ENCODE measurements at regions of chr6 and their contacts with region 1.

Region 1: DNA sequence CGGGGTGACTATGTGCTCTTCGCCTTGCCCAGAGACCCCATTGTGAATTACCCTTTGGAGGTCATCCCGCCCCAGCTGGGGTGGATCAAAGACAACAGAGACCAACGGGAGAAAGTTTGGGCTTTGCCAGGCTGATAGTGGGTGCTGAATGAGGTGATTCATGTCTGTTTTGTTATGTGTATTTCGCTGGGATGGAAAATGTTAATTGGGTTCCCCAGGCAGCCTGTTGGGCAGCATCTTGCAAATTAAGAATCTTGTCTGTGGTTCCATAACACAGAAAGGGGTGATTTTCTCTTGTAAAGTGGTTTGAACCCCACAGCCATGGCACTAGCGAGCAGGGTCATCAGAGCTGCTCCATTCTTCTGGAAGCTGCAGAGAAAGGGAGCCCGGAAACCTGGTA is 63.1 kb upstream of the UNC93A start:
- DNase-seq: no peak
- ATAC-seq: no peak
- H3K4me3 ChIP-seq: no peak overlapping the region
- H3K27ac ChIP-seq: no peak overlapping the region
- H3K4me1 ChIP-seq: no peaks in the 10 kb centered on the region
- H3K27me3 ChIP-seq: peaks cover 5 to 8% of the 10 kb centered on the region in 2 experiments
- CTCF ChIP-seq: no peak
- EP300 ChIP-seq: no peak
- POLR2A ChIP-seq: no peak
- RAD21 ChIP-seq: no peak

Region 2: DNA sequence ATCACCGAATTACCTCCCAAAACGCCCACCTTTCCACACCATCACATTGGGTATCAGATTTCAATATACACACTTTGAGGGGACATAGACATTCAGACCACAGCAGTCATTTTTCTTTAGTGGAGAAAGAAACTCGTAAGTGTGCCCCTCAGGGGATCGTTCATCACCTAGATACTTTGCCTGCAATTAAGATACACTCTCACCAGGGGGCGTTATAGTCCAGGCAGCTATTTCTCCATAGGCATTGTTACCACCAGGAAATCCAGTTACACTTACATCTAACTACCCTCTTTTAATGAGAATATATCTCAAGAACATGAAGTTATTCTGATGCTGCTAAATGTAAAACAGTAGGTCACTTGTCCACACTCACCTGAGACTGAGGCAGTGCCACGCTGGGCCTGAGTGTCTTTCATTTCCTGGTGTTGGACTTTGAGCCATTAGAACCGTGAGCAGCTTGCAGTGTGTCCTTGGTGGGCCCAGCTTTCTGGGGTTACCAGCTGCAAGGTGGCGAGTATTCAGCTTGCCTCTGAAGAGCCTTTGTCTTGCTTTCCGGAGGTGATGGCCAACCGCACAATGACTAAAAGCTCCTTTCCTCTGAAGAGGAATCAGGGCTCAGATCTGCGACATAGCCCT is 28.1 kb after region 1 on chr6:
- CTCF ChIA-PET with region 1: no interaction called
- POLR2A ChIA-PET with region 1: no interaction called
- RAD21 ChIA-PET with region 1: no interaction called
- SMC1A ChIA-PET with region 1: no interaction called
- in situ Hi-C with region 1: no loop called
- intact Hi-C with region 1: no loop called
- DNase-seq: no peak
- ATAC-seq: no peak
- H3K4me3 ChIP-seq: no peak overlapping the region
- H3K27ac ChIP-seq: no peak overlapping the region
- H3K4me1 ChIP-seq: no peaks in the 10 kb centered on the region
- H3K27me3 ChIP-seq: no peaks in the 10 kb centered on the region; a peak in 1 of 4 replicates
- CTCF ChIP-seq: 0 out of 6 replicates have a peak, but pooled peaks of 1 of the 3 experiments have one; percentile 20
- EP300 ChIP-seq: no peak
- POLR2A ChIP-seq: no peak
- RAD21 ChIP-seq: no peak

Region 3: GRCh38 chr6:167279766-167280446 is 51.9 kb after region 1 on chr6:
- CTCF ChIA-PET with region 1: no interaction called
- POLR2A ChIA-PET with region 1: no interaction called
- RAD21 ChIA-PET with region 1: no interaction called
- SMC1A ChIA-PET with region 1: no interaction called
- in situ Hi-C with region 1: no loop called
- intact Hi-C with region 1: loop called (anchors 5 kb)
- DNase-seq: no peak
- ATAC-seq: no peak
- H3K4me3 ChIP-seq: no peak overlapping the region
- H3K27ac ChIP-seq: no peak overlapping the region
- H3K4me1 ChIP-seq: no peaks in the 10 kb centered on the region
- H3K27me3 ChIP-seq: peaks cover 0 to 5% of the 10 kb centered on the region in 2 experiments
- CTCF ChIP-seq: no peak
- EP300 ChIP-seq: no peak
- POLR2A ChIP-seq: no peak
- RAD21 ChIP-seq: no peak

Region 4: DNA sequence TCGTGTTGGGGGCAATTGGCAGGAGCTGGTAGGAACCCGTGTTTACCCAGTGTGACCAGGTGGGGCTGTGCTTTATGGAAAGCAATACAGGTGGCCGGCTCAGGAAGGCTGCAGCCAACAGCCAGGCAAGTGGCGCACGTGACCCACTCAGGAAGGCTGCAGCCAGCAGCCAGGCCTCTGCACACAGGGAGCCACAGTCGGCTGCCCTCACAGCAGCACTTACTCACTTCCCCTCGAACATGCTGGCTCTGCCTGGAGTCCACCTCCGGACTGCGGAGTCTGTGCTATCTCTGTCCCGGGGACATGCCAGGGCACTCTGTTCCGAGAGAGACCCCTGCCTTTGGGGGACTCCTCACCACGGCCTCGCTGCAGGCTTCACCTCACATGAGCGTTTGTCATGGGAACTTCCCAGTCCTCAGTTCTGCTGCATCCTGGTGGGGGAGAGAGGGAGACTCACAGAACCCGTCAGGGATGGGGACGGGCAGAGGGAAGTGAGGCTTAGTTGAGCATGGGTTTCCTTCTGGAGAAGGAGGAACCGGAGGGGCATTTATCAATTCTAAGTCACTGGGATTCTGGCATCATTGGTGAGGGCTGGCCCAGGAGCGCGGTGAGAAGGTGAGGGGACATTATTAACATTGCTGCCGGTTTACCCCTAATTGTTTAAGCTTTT is 173.7 kb after region 1 on chr6:
- CTCF ChIA-PET with region 1: no interaction called
- POLR2A ChIA-PET with region 1: no interaction called
- RAD21 ChIA-PET with region 1: no interaction called
- SMC1A ChIA-PET with region 1: no interaction called
- in situ Hi-C with region 1: no loop called
- intact Hi-C with region 1: no loop called
- DNase-seq: no peak
- ATAC-seq: no peak
- H3K4me3 ChIP-seq: no peak overlapping the region
- H3K27ac ChIP-seq: no peak overlapping the region
- H3K4me1 ChIP-seq: no peaks in the 10 kb centered on the region
- H3K27me3 ChIP-seq: peaks cover 4 to 6% of the 10 kb centered on the region in 2 experiments; a peak in 3 of 4 replicates
- CTCF ChIP-seq: no peak
- EP300 ChIP-seq: no peak
- POLR2A ChIP-seq: no peak
- RAD21 ChIP-seq: no peak

Region 5: GRCh38 chr6:167485186-167485978 is 257.4 kb after region 1 on chr6:
- CTCF ChIA-PET with region 1: no interaction called
- POLR2A ChIA-PET with region 1: no interaction called
- RAD21 ChIA-PET with region 1: no interaction called
- SMC1A ChIA-PET with region 1: no interaction called
- in situ Hi-C with region 1: no loop called
- intact Hi-C with region 1: no loop called
- DNase-seq: no peak
- ATAC-seq: no peak
- H3K4me3 ChIP-seq: no peak overlapping the region
- H3K27ac ChIP-seq: no peak overlapping the region
- H3K4me1 ChIP-seq: no peaks in the 10 kb centered on the region
- H3K27me3 ChIP-seq: 0 out of 4 replicates have a peak, but pooled peaks cover 0 to 1% of the 10 kb centered on the region in 2 experiments
- CTCF ChIP-seq: peak in 2 of 3 experiments; percentile 23 to 31; a peak in 1 of 6 replicates
- EP300 ChIP-seq: no peak
- POLR2A ChIP-seq: no peak
- RAD21 ChIP-seq: no peak

Measured in GM12878 (cell line).